Gastrocnemius medialis (tissue), 4 donors: ENCODE measurements at regions of chr11 and their contacts with region 1.

Region 1: DNA sequence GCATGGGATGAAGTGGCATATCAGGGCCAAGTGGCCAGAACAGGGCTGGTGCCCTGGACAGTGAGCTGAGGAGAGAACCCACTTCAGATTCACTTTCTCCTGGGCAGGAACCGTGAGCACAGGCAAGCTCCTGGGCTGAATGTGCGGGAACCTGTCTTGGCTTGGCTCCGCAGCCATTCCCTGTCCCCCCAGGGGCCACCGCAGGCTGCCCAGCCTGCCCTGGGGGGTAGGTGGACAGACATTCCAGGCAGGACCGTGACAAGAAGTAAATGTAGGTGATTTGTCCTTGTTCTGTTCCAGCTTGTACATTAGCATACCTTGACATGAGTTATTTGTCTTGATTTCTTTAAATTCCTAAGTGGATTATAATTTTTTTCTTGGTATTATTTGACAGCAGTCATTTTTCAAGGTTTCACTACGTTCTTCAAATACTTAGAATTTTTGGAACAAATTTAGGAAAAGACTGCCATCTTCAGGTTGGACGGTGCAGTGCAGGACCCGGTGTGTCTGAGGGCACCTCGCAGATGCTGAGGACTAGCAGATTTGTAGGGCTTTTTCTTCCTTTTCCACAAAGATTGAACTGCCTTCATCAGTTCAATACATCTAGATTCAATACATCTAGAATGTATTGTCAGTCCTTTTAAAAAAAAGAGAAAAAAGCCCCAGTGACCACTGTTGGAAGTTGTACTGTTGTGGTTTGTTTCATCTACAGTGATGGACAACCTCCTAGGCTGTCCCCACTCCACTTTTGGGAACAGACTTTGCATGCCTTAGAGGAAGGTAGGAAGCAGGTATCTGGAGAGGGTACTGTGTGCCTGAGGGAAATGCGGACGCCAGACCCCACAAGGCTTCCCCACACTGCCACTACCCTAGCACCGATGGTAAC is 115.1 kb upstream of the RASSF10 start:
- DNase-seq: peak in 1 of 2 donors; percentile 46
- ATAC-seq: no peak
- H3K4me3 ChIP-seq: no peak overlapping the region
- H3K27ac ChIP-seq: peak overlapping the region; percentile 68 to 82 (median 70)
- H3K4me1 ChIP-seq: peaks cover 48 to 50% of the 10 kb centered on the region in 2 donors
- H3K27me3 ChIP-seq: no peaks in the 10 kb centered on the region
- CTCF ChIP-seq: peak; percentile 87 to 93 (median 89)
- POLR2A ChIP-seq: no peak

Region 2: DNA sequence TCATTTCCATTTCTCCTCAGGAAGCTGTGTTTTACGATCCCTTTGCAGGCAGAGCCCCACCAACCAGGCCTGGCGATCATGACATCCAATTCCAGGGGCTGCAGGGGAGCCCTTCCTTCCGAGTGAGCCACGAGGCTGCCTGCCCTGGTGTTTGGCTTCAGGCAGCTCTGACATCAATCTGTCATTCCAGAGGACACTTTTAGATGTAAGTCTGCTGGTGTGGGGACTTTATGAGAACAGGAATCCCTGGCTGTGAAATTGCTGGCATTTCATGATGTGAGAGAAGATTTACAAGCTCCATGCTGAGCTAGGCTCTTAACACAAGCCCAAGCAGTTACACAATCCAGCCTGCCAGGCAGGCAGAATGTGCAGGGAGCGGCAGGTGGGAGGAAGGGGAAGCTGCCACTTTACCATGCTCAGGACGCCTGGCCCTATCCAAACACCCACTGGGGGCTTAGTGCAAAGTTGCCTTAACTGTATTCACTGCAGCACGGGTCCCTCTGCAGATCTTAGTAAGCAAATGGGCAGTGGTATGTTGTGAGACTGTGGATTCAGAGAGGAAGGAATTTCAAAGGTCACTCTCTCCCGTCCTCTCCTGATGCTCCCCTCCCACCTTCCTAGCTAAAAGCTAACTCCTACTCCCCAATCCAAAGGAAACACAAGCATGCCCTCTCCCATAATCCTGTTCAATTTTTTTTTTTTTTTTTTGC is 827.1 kb before region 1 on chr11:
- in situ Hi-C with region 1: no loop called
- intact Hi-C with region 1: loop called (anchors 10 kb)
- DNase-seq: peak; percentile 80 to 90
- ATAC-seq: peak; percentile 74 to 79
- H3K4me3 ChIP-seq: no peak overlapping the region
- H3K27ac ChIP-seq: peak overlapping the region; percentile 84 to 89 (median 86)
- H3K4me1 ChIP-seq: peaks cover 44 to 45% of the 10 kb centered on the region in 2 donors
- H3K27me3 ChIP-seq: no peaks in the 10 kb centered on the region
- CTCF ChIP-seq: no peak
- POLR2A ChIP-seq: peak; percentile 55 to 73

Region 3: DNA sequence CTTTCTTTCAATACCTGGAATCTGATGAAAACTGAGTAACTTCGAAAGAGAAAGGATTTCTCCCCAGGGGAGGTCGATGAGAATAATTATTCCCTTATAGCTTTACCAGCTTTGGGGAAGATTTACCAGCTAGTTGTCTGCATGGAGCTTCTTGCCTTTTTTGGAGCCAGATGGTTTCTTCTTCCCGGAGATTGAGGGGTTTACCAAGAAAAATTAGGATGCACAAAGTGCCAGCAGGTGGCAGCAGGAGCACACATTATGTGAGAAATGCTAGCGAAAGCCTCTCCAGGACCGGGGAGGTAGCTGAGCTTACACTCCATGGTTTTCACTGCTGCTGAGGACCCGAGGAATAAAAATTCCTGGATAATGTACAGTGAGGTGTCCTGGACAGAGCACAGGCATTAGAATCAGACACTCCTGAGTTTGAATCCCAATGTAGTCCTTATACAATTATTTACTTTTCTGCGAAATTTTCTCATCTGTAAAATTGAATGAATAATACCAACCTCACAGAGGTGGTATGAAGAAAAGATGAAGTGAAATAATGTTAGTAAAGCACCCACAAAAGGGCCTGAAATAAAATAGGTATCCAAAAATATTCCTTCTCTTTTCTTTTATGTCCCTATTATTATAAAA is 562.7 kb before region 1 on chr11:
- in situ Hi-C with region 1: loop called (anchors 5 to 25 kb)
- intact Hi-C with region 1: loop called (anchors 2 kb)
- DNase-seq: peak; percentile 50 to 64
- ATAC-seq: peak; percentile 83 to 85
- H3K4me3 ChIP-seq: no peak overlapping the region
- H3K27ac ChIP-seq: no peak overlapping the region
- H3K4me1 ChIP-seq: peaks cover 3 to 5% of the 10 kb centered on the region in 2 donors
- H3K27me3 ChIP-seq: no peaks in the 10 kb centered on the region
- CTCF ChIP-seq: peak; percentile 64 to 84 (median 78)
- POLR2A ChIP-seq: no peak

Region 4: DNA sequence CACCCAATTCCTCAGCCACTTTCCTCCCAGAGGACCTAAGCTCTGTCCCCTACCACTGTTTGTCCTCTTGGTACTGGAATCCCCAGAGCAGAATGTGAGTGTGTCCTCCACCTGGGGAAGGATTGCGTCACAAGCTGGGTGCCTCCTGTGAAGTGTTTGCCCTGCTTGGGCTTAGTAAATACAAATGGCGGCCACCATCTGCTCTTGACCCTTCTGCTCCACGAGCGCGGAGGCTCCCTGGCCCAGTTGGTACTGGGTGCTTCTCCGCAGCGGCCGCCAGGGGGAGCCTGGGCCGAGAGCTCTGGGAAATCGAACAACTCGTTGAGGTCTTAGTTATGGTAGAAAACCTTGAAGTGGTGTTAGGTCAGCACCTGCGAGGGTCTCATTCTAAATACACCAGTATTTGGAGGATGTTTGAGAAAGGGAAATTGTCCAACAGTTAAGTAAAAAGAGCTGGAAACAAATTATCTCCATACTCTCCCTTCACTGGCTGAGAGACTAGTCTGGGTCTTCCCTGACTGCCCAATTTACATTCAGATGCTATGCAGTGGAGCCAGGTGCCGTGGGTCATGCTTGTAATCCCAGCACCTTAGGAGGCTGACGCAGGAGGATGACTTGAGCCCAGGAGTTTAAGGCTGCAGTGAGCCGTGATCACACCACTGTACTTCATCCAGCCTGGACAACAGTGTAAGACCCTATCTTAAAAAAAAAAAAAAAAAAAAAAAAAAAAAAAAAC is 294.5 kb before region 1 on chr11:
- in situ Hi-C with region 1: loop called in 3 of 4 experiments (anchors 5 to 10 kb)
- intact Hi-C with region 1: loop called (anchors 2 kb)
- DNase-seq: peak in 1 of 2 donors; percentile 36
- ATAC-seq: peak; percentile 65 to 86
- H3K4me3 ChIP-seq: no peak overlapping the region
- H3K27ac ChIP-seq: no peak overlapping the region
- H3K4me1 ChIP-seq: peaks cover 0 to 6% of the 10 kb centered on the region in 2 donors
- H3K27me3 ChIP-seq: no peaks in the 10 kb centered on the region
- CTCF ChIP-seq: peak; percentile 48 to 82 (median 66)
- POLR2A ChIP-seq: no peak

Region 5: GRCh38 chr11:12813371-12814225 is 80.4 kb before region 1 on chr11:
- in situ Hi-C with region 1: loop called in 1 of 4 experiments (anchors 10 kb)
- intact Hi-C with region 1: loop called (anchors 2 kb)
- DNase-seq: peak; percentile 54 to 72
- ATAC-seq: peak; percentile 25 to 36
- H3K4me3 ChIP-seq: no peak overlapping the region
- H3K27ac ChIP-seq: peak overlapping the region; percentile 83 to 91 (median 87)
- H3K4me1 ChIP-seq: peaks cover 77 to 86% of the 10 kb centered on the region in 2 donors
- H3K27me3 ChIP-seq: no peaks in the 10 kb centered on the region
- CTCF ChIP-seq: peak in 3 of 5 experiments; percentile 24 to 45 (median 31)
- POLR2A ChIP-seq: no peak